HEK293T (cell line): ENCODE measurements at regions of chr15 and their contacts with region 1.

Region 1: GRCh38 chr15:73908030-73908821 is 18.0 kb upstream of the LOXL1 start:
- DNase-seq: peak; percentile 85

Region 2: DNA sequence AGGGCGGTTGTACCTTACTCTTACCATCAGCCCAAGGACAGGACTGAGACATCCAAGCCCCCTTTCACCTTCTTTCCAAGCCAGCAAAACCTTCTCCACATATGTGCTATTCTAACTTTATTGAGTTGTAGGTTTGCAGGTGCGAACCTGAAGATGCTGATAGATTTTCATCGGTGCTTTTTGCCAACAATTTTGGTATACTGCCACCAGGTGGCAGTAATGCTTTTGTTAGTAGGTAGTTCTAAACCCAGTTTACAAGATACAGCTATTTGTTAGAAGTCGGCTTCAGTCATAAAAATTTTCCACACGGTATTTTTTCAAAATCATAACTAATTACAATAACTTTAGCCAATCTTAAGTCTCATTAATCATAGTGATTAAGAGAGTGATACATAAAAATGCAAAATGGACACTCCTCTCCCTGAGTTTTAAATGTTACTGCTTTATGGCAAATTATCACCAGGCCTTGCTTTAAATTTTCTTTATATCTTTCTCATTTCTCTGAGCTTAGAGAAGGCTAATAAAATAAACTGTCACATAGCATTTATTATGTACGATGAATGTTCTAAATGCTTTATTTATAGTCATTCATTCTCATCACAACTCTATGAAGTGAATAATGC is 34.2 kb before region 1 on chr15:
- CTCF ChIA-PET with region 1: interaction called, 11 read pairs
- POLR2A ChIA-PET with region 1: no interaction called
- DNase-seq: peak; percentile 42

Region 3: GRCh38 chr15:73897441-73898261 is 10.6 kb before region 1 on chr15:
- CTCF ChIA-PET with region 1: interaction called, 15 read pairs
- POLR2A ChIA-PET with region 1: interaction called, 3 read pairs
- DNase-seq: peak; percentile 91

Region 4: GRCh38 chr15:73927476-73928240 is 19.4 kb after region 1 on chr15:
- CTCF ChIA-PET with region 1: interaction called, 13 read pairs
- POLR2A ChIA-PET with region 1: no interaction called
- DNase-seq: peak; percentile 81